Activated naive CD4-positive, alpha-beta T cell treated with anti-CD3 and anti-CD28 coated beads for 36 hours (primary cell): ENCODE measurements at regions of chr2 and their contacts with region 1.

Region 1: DNA sequence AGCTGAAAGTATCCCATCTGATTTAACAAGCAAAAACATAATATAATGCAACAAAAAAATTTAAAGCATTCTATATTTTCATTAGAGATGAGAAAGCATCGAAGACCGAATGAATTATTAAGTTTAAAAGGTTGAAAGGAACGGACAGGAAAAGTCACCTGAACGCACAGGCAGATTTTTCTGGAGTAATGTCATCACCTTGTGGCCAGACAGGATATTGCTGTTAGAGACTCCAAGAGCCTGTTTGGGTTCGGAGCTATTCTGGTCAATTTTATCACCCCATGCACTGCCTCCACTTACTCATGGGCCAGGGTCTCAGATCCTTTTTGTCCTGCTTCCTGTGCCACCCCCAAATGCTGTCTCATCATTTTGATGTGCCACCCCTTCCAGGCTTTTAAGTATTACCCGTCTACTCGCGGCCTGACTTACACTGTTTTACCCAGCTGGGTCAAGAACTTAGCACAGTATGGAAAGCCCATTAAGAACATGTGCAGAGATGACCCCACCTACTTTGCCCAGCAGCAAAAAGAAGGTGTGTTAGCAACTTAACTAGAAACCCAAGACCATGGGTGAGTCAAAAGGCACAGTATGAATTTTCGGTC is 27.3 kb downstream of the GKN2 start:
- DNase-seq: peak; percentile 76
- H3K4me3 Mint-ChIP-seq: no peak overlapping the region
- H3K27ac Mint-ChIP-seq: no peak overlapping the region
- H3K4me1 Mint-ChIP-seq: no peaks in the 10 kb centered on the region
- H3K27me3 Mint-ChIP-seq: peaks cover 4% of the 10 kb centered on the region

Region 2: DNA sequence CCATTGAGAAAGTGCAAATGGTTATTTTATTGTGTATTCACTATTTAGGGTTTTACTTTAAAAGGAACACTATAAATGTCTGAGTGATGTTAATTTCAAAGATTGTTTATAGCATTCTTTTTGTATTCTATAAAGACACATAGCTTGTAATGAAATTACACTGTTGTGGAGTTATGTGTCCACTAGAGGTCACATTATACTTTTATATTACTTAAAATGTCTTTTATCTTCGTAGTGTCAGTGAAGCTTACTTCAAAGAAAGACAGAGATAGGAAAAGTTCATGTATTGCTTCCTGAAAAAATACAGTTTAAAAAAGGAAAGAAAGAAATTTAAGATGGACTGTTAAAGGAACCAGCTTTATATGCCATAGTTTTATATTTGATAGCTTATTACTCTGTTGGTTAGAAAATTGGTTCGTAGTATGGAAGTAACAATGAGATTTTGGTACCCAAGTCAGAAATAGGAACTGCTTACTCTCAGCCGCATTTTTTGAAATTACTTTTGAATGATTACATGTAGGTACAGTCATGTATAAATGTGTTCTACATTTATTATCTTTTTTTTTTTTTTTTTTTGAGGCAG is 437.5 kb before region 1 on chr2:
- CTCF ChIA-PET with region 1: interaction called, 12 read pairs
- intact Hi-C with region 1: loop called (anchors 1 kb)
- DNase-seq: no peak
- H3K4me3 Mint-ChIP-seq: no peak overlapping the region
- H3K27ac Mint-ChIP-seq: no peak overlapping the region
- H3K4me1 Mint-ChIP-seq: peaks cover 2% of the 10 kb centered on the region
- H3K27me3 Mint-ChIP-seq: no peaks in the 10 kb centered on the region

Region 3: DNA sequence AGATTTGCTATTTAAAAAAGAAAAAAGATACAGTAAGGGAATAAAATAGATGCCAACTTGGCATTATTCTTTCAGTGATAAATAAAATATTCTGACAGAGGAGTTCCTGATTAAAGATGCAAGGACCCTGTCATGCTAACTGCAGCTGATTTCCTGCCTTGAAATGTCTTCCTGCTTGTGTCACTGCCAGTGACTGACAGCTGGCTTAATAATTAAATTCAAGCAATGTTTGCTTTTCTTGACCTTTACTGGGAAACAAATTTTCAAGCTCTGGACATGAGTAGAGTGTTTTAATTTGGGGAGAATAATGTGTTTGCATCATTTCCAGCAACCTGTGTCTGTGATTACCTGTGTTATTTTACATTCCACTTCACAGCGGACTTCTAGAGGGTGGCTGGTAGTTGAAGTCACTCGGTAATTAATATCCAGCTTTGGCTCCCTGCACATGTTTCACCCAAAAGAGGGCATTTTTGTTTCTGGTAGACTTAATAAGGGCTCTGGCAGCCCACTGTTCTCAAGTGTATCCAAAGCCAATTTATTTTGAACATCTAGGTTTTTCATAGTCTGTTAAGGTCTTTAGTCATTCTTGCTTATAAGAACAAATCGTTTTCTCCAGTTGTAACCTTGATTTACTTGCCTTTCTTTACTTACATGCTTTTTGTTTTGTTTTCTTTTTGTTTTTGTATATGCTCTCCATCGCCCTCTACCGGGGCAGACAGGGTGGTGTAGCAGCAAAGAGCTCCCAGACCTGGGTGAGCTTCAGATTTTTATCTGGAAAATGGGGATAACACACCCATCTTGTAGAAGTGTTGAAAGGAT is 330.5 kb before region 1 on chr2:
- CTCF ChIA-PET with region 1: interaction called, 7 read pairs
- intact Hi-C with region 1: loop called (anchors 1 kb)
- DNase-seq: peak; percentile 63
- H3K4me3 Mint-ChIP-seq: no peak overlapping the region
- H3K27ac Mint-ChIP-seq: no peak overlapping the region
- H3K4me1 Mint-ChIP-seq: peaks cover 3% of the 10 kb centered on the region
- H3K27me3 Mint-ChIP-seq: peaks cover 13% of the 10 kb centered on the region

Region 4: DNA sequence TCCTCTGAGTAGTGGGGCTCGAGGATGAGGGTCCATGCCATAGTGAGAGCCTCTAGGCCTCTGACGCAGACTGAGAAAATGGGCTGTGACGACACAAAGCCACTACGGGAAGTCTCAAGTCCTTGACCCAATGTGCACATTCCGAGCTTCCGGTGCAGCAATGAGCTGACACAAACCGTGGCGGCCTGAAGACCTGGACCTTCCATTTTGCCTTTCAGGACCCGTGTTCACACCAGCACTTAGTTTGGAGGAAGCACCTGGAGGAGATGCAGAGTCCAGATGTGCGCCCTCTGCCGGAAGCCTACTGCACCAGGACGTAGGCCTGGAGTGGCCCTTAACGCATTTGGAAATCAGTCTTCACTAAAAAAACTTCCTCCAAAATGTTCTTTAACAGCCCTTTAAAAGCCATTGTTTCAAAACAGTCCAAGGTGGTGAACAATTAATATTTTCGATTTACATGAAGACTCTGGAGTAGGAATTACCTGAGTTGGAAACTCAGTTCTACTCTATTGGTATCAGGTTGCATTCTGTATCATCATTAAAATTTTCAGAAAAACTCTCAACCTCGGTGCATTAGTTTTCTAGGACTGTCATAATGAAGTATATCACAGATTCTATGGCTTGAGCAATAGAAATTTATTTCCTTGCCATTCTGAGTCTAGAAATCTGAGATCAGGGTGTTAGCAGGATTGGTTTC is 88.1 kb before region 1 on chr2:
- CTCF ChIA-PET with region 1: interaction called, 27 read pairs
- intact Hi-C with region 1: loop called (anchors 1 kb)
- DNase-seq: peak; percentile 85
- H3K4me3 Mint-ChIP-seq: no peak overlapping the region
- H3K27ac Mint-ChIP-seq: peak overlapping the region; percentile 61
- H3K4me1 Mint-ChIP-seq: peaks cover 34% of the 10 kb centered on the region
- H3K27me3 Mint-ChIP-seq: no peaks in the 10 kb centered on the region

Region 5: DNA sequence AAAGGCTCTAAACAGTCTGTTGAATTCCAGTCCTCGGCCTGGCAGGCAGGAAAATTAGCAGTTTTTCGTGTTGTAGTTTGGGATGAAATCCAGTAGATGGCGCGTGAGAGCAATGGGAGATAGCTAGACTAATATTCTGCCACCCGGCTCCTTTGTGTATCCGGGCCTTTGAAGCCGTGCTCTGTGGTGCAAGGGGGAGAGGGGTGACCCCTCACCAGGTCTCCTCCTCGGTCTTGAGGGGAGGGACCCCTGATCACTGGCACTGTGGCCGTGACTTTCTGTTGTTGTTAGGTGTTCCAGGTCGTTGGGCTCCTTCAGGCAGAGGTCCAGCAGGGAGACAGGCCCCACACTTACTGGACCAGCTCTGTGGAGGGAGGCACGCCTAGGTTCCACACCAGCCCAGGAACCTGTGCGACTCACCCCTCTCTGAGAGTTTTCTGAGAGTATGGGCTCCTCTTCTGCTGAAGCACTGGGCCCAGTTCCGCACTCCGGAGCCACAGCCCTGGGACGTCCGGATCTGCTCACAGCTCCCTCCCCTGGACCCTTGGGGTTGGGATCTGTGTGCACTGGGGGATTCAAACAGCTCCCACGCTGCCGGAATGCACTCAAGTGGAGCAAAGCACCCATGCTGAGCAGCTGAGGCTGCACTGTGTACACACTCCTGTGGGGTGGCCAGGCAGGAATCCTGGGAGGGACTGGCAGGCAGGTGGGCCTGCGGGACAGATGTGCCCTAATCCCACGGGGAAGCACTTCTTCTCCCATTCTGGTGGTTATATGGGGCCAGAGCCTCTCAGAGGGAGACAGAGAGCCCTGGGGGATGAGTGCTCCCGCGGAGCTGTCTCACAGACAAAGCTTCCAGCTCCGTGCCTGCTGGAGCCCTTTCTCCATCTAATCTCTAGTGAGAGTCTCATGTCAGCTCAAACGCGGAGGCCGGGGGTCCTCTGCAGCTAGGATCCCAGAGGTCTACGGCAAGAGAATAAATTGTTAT is 18.5 kb after region 1 on chr2:
- CTCF ChIA-PET with region 1: interaction called, 22 read pairs
- intact Hi-C with region 1: no loop called
- DNase-seq: peak; percentile 74
- H3K4me3 Mint-ChIP-seq: no peak overlapping the region
- H3K27ac Mint-ChIP-seq: no peak overlapping the region
- H3K4me1 Mint-ChIP-seq: no peaks in the 10 kb centered on the region
- H3K27me3 Mint-ChIP-seq: peaks cover 3% of the 10 kb centered on the region

Region 6: DNA sequence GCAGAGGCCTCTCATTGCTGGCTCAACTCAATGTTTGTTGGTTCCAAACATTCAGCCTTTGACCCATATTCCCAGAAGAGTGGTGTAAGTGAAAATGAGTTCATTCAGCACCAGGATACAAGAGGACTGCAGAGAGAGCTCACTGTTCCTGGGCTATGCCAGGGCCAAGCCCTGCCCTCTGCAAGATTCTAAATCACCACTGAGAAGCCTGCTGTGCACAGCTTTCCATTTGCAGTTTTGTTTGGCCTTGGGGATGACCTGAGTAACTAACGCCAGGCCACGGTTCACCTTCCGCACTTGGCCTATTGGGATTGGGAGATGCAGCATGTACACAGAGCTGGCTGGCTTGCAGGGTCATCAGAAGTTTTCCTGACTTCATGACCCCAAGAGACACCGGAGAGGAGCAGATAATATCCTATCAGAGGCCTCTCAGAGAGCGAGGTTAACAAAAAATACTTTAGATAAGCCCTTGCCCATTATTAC is 61.7 kb after region 1 on chr2:
- CTCF ChIA-PET with region 1: no interaction called
- intact Hi-C with region 1: no loop called
- DNase-seq: no peak
- H3K4me3 Mint-ChIP-seq: no peak overlapping the region
- H3K27ac Mint-ChIP-seq: no peak overlapping the region
- H3K4me1 Mint-ChIP-seq: no peaks in the 10 kb centered on the region
- H3K27me3 Mint-ChIP-seq: no peaks in the 10 kb centered on the region

Region 7: DNA sequence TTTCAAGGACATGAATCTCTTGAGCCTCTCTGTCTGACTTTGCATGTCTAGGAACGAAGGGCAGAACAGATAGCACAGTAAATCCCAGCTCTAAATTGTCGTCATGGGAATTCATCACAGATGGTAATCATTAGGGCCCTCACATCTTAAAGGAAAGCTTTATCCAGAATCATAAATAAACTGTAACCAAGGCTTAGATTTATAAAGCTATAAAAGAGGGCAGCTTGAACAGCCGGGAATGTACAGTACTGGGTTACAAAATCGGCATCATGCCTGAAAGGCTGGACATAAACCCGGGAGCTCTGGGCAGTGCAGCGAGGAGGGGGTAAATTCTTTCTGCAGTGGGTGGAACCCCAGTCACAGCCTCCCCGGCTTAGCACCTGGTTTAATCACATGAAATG is 317.3 kb after region 1 on chr2:
- CTCF ChIA-PET with region 1: no interaction called
- intact Hi-C with region 1: no loop called
- DNase-seq: no peak
- H3K4me3 Mint-ChIP-seq: no peak overlapping the region
- H3K27ac Mint-ChIP-seq: no peak overlapping the region
- H3K4me1 Mint-ChIP-seq: no peaks in the 10 kb centered on the region
- H3K27me3 Mint-ChIP-seq: peaks cover 10% of the 10 kb centered on the region

Region 8: DNA sequence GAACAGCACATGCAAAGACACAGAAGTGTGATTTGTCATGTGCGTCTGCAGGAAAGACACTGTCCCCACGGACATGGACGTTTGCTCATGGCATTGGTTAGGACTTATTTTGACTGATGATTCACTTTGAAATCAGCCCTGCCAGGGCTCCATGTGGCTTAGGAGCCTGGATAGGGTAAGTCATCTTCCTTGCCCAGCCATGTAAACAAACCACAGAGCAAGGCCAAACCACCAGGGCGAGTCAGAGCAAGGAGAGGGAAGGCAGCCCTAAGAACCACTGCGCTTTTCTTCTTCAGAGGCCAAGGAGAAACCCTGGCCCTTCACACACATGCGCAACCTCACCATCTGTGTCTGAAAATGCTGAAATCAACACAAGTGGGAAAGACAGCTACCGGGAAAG is 372.9 kb after region 1 on chr2:
- CTCF ChIA-PET with region 1: no interaction called
- intact Hi-C with region 1: no loop called
- DNase-seq: no peak
- H3K4me3 Mint-ChIP-seq: no peak overlapping the region
- H3K27ac Mint-ChIP-seq: no peak overlapping the region
- H3K4me1 Mint-ChIP-seq: no peaks in the 10 kb centered on the region
- H3K27me3 Mint-ChIP-seq: peaks cover 3% of the 10 kb centered on the region